ENCODE measurements at regions of chr14 and their contacts with region 1.

Region 1: GRCh38 chr14:61475316-61475715 is 153.9 kb downstream of the PRKCH start:
- DNase-seq: no peak
- H3K4me3 Mint-ChIP-seq: peak overlapping the region; percentile 42
- H3K27ac Mint-ChIP-seq: peak overlapping the region; percentile 100
- H3K4me1 Mint-ChIP-seq: peaks cover 93% of the 10 kb centered on the region
- H3K27me3 Mint-ChIP-seq: peaks cover 1% of the 10 kb centered on the region

Region 2: GRCh38 chr14:61326847-61327246 is 148.5 kb before region 1 on chr14:
- CTCF ChIA-PET with region 1: interaction called, 3 read pairs
- POLR2A ChIA-PET with region 1: interaction called, 3 read pairs
- intact Hi-C with region 1: loop called (anchors 1 kb)
- DNase-seq: no peak
- H3K4me3 Mint-ChIP-seq: peak overlapping the region; percentile 99
- H3K27ac Mint-ChIP-seq: peak overlapping the region; percentile 93
- H3K4me1 Mint-ChIP-seq: peaks cover 64% of the 10 kb centered on the region
- H3K27me3 Mint-ChIP-seq: no peaks in the 10 kb centered on the region

Region 3: DNA sequence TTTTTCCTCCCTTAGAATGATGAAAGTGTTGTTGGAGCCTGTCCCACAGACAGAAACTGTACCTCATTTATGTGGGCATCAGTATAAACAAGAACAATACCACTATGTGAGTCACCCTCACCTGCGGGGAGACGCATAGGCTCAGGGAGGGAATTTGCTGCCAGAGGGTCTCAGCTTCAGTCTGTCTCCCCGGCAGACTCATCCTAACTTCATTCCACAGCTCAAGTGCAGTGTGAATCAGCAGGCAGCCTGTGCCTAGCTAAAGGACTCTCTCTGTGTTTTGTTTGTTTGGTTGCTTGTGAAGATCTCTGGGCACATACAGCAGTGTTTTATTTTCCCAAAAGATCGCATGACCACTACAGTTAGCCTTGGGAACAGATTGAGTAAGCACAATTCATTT is 55.0 kb before region 1 on chr14:
- CTCF ChIA-PET with region 1: no interaction called
- POLR2A ChIA-PET with region 1: no interaction called
- intact Hi-C with region 1: no loop called
- DNase-seq: peak; percentile 44
- H3K4me3 Mint-ChIP-seq: no peak overlapping the region
- H3K27ac Mint-ChIP-seq: peak overlapping the region; percentile 73
- H3K4me1 Mint-ChIP-seq: peaks cover 28% of the 10 kb centered on the region
- H3K27me3 Mint-ChIP-seq: no peaks in the 10 kb centered on the region

Region 4: DNA sequence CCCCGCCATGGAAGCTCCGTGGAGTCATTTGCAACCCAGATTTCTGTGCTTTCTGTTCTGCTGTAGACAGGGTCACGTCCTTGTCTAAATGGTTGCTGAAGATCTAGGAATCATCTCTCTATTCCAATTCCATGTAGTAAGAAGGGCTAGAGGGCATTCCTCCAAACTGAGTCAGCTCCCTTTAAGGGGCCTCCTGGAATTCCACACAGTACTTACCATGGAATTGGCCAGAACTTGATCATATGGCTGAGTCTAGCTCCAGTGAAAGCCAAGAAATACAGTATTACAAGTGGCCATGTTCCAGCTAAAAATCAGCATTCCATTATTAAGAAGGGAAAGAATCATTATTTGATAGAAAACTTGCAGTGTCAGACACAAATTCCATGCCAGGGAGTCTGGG is 17.9 kb after region 1 on chr14:
- CTCF ChIA-PET with region 1: interaction called, 7 read pairs
- POLR2A ChIA-PET with region 1: interaction called, 11 read pairs
- intact Hi-C with region 1: no loop called
- DNase-seq: no peak
- H3K4me3 Mint-ChIP-seq: no peak overlapping the region
- H3K27ac Mint-ChIP-seq: no peak overlapping the region
- H3K4me1 Mint-ChIP-seq: peaks cover 54% of the 10 kb centered on the region
- H3K27me3 Mint-ChIP-seq: no peaks in the 10 kb centered on the region

Region 5: DNA sequence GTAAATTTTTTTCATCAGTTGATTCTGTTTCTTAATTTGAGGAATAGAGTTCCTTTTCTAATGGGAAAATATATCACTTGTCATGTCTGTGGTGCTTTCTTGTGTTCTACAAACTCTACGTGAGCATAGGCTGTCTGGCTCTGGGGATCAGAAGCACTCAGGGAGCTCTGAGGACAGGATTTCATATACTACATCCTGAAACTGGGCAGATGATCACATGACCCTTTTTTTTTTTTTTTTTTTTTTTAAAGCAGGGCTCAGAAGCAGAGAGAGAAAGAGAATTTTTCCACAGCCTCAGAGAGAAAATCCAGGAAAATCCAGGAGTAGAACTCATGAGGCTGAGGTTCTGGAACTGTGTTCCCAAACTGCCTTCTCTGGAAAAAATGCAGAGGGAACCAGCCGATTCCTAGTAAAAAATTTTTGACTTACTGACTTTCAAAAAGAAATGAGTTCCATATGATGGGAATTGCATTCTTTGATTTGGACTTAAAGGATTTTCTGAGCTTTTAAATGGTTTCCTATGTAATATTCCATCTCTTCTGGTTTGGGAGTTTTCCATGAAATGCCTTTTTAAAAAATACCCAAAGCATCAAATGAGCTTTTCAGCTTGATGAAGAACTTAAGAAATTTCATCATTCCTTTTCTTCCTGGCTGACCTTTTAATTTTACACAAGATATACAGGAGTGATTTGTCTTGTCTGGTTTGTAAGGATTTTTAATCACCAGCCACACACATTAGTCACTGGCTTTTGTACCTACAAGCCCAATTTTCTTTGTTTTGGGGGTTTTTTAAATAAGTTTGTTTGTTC is 36.9 kb after region 1 on chr14:
- CTCF ChIA-PET with region 1: interaction called, 17 read pairs
- POLR2A ChIA-PET with region 1: interaction called, 37 read pairs
- intact Hi-C with region 1: loop called (anchors 1 kb)
- DNase-seq: no peak
- H3K4me3 Mint-ChIP-seq: peak overlapping the region; percentile 51
- H3K27ac Mint-ChIP-seq: peak overlapping the region; percentile 98
- H3K4me1 Mint-ChIP-seq: peaks cover 95% of the 10 kb centered on the region
- H3K27me3 Mint-ChIP-seq: no peaks in the 10 kb centered on the region

Region 6: GRCh38 chr14:61598980-61599379 is 123.7 kb after region 1 on chr14:
- CTCF ChIA-PET with region 1: interaction called, 4 read pairs
- POLR2A ChIA-PET with region 1: interaction called, 5 read pairs
- intact Hi-C with region 1: loop called (anchors 1 kb)
- DNase-seq: peak; percentile 54
- H3K4me3 Mint-ChIP-seq: no peak overlapping the region
- H3K27ac Mint-ChIP-seq: peak overlapping the region; percentile 65
- H3K4me1 Mint-ChIP-seq: peaks cover 48% of the 10 kb centered on the region
- H3K27me3 Mint-ChIP-seq: no peaks in the 10 kb centered on the region

Region 7: DNA sequence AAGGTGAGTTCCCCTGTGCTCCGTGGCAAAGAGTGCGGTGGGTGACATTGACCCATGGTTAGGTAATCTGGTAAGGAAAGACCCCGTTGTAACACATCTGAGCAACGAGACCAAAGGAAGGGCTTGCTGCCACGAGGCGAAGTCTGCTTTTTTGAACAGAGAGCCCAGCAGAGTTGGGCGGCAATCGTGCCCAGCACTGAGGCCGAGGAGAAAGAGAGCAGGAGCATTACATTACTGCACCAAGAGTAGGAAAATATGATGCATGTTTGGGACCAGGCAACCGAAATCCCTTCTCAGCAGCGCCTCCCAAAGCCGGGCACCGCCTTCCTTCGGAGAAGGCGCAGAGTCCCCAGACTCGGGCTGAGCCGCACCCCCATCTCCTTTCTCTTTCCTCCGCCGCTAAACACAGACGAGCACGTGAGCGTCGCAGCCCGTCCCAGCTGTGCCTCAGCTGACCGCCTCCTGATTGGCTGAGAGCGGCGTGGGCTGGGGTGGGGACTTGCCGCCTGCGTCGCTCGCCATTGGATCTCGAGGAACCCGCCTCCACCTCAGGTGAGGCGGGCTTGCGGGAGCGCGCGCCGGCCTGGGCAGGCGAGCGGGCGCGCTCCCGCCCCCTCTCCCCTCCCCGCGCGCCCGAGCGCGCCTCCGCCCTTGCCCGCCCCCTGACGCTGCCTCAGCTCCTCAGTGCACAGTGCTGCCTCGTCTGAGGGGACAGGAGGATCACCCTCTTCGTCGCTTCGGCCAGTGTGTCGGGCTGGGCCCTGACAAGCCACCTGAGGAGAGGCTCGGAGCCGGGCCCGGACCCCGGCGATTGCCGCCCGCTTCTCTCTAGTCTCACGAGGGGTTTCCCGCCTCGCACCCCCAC is 219.7 kb after region 1 on chr14 and contains the start of gene HIF1A:
- CTCF ChIA-PET with region 1: interaction called, 12 read pairs
- POLR2A ChIA-PET with region 1: interaction called, 28 read pairs
- intact Hi-C with region 1: loop called (anchors 1 kb)
- DNase-seq: peak; percentile 99
- H3K4me3 Mint-ChIP-seq: peak within 1 kb of the TSS; percentile 98
- H3K27ac Mint-ChIP-seq: peak within 1 kb of the TSS; percentile 98
- H3K4me1 Mint-ChIP-seq: peaks cover 49% of the 10 kb centered on the region
- H3K27me3 Mint-ChIP-seq: no peaks in the 10 kb centered on the region
- total RNA-seq, gene HIF1A: 283 to 287 TPM

Region 8: GRCh38 chr14:61761959-61762786 is 286.9 kb after region 1 on chr14 and contains the start of gene SNAPC1:
- CTCF ChIA-PET with region 1: interaction called, 14 read pairs
- POLR2A ChIA-PET with region 1: interaction called, 3 read pairs
- intact Hi-C with region 1: loop called (anchors 1 kb)
- DNase-seq: peak; percentile 98
- H3K4me3 Mint-ChIP-seq: peak within 1 kb of the TSS; percentile 95
- H3K27ac Mint-ChIP-seq: peak within 1 kb of the TSS; percentile 95
- H3K4me1 Mint-ChIP-seq: peaks cover 42% of the 10 kb centered on the region
- H3K27me3 Mint-ChIP-seq: no peaks in the 10 kb centered on the region
- total RNA-seq, gene SNAPC1: 9.1 TPM

Measured in activated CD4-positive, alpha-beta memory T cell treated with anti-CD3 and anti-CD28 coated beads for 36 hours (primary cell).